PC-9 (cell line): ENCODE measurements at regions of chr10 and their contacts with region 1.

Region 1: GRCh38 chr10:17257466-17258321 is 29.7 kb downstream of the VIM start:
- DNase-seq: peak in 1 of 2 experiments; percentile 47
- H3K4me3 ChIP-seq: no peak overlapping the region
- H3K27ac ChIP-seq: no peak overlapping the region
- H3K4me1 ChIP-seq: no peaks in the 10 kb centered on the region
- H3K27me3 ChIP-seq: no peaks in the 10 kb centered on the region
- CTCF ChIP-seq: peak; percentile 75

Region 2: DNA sequence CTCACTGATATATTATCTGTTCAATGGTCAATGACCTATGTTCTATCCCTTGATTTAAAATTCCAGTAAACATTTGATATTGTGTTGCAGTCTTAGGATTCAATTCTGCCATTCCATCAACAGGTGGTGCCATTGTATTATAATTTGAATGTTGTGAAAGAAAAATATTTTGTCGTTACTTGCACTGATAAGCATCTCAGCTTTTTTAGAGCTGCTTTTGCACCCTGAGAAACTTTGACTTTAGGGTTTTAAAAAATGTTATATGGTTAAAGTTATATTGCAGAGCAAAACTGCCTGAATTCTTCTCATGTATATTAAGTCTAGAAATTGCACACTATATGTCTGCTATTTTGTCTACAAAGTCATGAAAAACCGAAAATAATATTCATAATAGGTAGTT is 1378.6 kb before region 1 on chr10:
- CTCF ChIA-PET with region 1: no interaction called
- POLR2A ChIA-PET with region 1: no interaction called
- intact Hi-C with region 1: loop called (anchors 2 kb)
- DNase-seq: no peak
- H3K4me3 ChIP-seq: no peak overlapping the region
- H3K27ac ChIP-seq: no peak overlapping the region
- H3K4me1 ChIP-seq: no peaks in the 10 kb centered on the region
- H3K27me3 ChIP-seq: 0 out of 2 replicates have a peak, but pooled peaks cover 2% of the 10 kb centered on the region
- CTCF ChIP-seq: peak; percentile 75

Region 3: DNA sequence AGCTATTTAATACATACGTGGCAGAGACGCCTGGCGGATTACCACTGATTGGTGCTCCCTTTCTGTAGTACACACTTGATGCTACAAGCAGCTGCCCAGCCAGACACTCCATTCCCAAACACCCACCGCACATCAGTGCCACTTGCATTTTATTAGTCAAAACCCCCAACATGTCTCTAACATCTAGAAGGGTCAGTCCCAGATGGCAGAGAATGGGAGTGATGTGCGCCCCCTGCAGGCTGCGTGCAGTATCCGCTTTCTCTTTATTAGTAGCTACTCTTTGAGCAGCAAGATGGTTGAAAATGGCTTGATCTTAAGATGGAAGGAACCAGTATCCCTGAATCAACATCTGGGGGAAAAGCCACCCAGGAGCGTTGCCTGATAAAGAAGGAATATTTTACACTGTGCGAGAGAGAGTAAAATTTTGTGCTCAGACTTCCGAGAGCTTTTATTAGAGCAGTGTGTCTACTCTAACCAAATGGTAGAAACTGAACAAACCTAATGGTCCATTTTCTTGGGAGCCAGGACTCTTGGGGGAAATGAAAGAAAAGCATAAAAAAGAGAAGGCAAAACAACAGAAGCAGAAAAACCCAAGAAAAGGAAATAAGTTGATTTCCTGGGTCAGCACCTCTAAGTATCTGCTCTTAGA is 118.4 kb after region 1 on chr10:
- CTCF ChIA-PET with region 1: interaction called, 14 read pairs
- POLR2A ChIA-PET with region 1: no interaction called
- intact Hi-C with region 1: no loop called
- DNase-seq: no peak
- H3K4me3 ChIP-seq: no peak overlapping the region
- H3K27ac ChIP-seq: no peak overlapping the region
- H3K4me1 ChIP-seq: no peaks in the 10 kb centered on the region
- H3K27me3 ChIP-seq: no peaks in the 10 kb centered on the region
- CTCF ChIP-seq: peak; percentile 31; the same call in 1 of the 2 replicates

Region 4: DNA sequence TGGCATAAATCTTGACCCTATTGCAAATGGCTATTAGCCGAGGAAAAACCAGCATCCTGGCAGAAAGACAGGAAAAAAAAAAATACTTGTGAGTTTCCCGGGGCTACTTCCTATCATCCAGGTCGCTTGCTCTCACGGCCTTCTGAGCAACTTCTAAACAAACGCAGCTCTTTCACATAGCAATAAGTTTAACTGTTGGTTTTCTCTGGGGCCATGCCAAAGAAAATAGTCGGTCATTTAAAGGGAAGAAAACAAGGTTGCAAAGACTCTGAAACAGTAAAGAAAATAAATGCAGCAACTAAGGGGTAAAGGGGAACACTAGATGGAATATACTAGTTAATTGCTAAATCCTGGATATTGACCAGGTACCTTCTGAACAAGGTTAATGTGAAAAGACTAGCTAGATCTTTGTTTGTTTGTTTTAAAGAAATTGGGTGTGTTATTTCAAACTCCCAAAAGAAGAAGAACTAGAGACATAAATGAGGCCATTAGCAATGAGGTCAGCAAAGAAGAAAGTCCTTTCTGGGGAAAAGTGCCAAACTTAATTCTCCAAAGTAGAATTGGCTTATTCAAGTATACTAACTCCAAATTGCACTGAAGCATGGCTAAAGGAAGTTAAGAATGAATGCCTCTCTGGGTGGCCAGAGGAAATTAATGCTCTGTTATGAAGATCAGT is 748.2 kb after region 1 on chr10:
- CTCF ChIA-PET with region 1: no interaction called
- POLR2A ChIA-PET with region 1: no interaction called
- intact Hi-C with region 1: no loop called
- DNase-seq: no peak
- H3K4me3 ChIP-seq: no peak overlapping the region
- H3K27ac ChIP-seq: no peak overlapping the region
- H3K4me1 ChIP-seq: no peaks in the 10 kb centered on the region
- H3K27me3 ChIP-seq: no peaks in the 10 kb centered on the region
- CTCF ChIP-seq: no peak